GM10248 (cell line): ENCODE measurements at regions of chr4 and their contacts with region 1.

Region 1: DNA sequence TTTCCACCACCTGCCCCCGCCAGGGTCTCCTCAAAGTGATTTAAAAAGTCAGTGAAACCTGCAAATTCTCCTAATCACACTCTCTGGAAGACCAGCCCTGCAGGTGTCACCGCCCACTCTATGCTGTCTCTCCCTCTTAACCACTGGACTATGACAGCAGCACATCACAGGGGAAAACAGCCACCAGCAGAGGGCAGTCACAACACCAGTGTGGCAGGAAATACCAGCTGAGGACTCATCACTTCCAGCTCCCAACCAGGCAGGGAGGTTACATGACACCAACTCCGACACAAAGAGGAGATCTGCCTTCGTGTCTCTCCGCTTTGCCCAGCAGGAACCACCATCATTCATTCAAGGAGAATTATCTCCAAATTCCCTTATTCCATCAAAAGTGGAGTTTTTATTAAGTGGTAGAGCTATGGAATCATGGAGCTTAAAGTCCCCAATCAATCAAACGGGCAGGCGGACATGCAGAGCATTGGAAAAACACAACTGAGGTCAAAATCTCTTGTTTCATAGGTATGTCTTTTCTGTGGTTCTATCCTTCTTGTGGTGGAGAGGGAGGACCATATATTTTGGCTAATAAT is 91.3 kb downstream of the NSUN7 start:
- DNase-seq: peak; percentile 62
- CTCF ChIP-seq: peak; percentile 74

Region 2: GRCh38 chr4:40515398-40516293 is 325.4 kb before region 1 on chr4:
- CTCF ChIA-PET with region 1: no interaction called
- POLR2A ChIA-PET with region 1: no interaction called
- DNase-seq: peak; percentile 84
- CTCF ChIP-seq: no peak

Region 3: GRCh38 chr4:40736910-40737309 is 104.2 kb before region 1 on chr4:
- CTCF ChIA-PET with region 1: interaction called, 128 read pairs
- POLR2A ChIA-PET with region 1: no interaction called
- DNase-seq: peak; percentile 55
- CTCF ChIP-seq: peak; percentile 37

Region 4: DNA sequence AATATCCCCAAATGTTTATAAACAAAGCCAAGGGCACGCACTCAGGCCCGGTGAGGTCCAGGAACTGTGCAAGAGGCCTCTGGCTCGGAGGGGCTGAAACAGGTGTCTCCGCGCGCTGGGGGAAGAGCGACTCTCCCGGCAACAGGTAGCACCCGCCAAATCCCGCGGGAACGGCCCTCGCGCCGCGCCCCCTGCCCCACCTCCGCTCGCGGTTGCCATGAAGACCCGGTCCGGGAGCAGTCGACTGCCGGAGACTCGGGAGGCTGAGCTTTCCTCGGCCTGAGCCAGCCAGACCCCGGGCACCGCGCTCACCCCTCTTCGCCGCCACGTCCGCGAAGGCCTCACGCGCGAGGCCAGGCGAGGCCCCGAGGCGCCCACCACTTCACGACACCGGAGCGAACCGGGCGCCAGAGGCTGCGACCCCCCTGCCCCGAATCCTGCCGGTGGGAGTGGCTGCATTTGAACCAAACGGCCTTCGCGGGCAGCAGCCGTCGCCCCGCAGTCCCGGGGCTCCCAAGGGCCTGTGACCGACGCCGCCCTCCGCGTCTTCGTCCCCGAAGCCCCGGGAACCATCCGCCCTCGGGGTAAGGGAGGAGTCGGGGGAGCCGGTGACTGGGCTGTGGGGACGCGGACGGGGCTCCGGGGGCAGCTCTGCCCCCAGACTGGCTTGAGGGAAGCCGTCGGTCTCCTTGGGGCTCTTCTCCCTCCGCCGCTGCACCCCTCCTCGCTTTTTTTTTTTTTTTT is 91.2 kb before region 1 on chr4 and contains the start of gene NSUN7:
- CTCF ChIA-PET with region 1: interaction called, 12 read pairs
- POLR2A ChIA-PET with region 1: no interaction called
- DNase-seq: peak; percentile 39
- CTCF ChIP-seq: no peak

Region 5: DNA sequence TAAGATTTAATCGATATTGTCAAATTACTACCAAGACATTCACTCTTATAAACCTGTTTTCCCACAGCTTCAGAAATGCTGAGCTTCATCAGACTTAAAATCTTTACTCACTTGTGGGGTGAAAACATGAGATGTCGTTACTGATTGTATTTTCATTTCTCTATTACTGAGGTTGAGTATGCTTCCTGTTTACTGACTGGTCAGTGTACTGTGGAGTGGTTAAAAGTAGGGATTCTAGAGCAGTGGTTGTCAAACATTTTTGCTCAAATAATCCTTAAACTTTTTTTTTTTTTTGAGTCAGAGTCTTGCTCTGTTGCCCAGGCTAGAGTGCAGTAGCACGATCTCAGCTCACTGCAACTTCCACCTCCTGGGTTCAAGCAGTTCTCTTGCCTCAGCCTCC is 41.0 kb before region 1 on chr4:
- CTCF ChIA-PET with region 1: interaction called, 11 read pairs
- POLR2A ChIA-PET with region 1: no interaction called
- DNase-seq: peak; percentile 28
- CTCF ChIP-seq: no peak

Region 6: DNA sequence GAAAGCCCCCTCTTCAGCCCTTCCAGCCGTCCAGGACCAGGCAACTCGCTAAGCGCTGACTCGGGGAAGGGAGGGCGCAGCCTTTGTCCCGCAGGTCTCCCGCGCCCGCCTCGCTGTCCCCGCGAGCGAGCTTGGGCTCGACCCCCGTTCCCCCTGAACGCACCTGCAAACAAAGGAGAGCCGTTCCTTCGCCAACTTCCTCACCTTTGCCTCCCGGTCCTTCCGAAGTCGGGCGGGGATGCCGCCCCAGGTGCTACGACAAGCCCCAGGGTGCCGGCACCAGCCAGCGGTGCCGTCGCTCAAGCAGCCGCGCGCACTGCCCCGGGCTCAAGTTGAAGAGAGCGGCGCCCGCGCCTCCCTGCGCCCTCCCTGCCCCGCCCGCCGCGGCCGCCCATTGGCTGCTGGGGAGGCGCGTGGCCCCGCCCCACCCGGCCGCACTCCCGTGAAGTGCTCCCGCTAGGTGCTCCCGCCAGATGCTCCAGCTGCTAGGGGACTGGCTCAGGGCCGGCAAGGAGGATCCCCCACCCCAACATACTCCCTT is 15.8 kb after region 1 on chr4:
- CTCF ChIA-PET with region 1: interaction called, 17 read pairs
- POLR2A ChIA-PET with region 1: no interaction called
- DNase-seq: peak; percentile 85
- CTCF ChIP-seq: no peak